Left cardiac atrium (tissue), 4 donors: ENCODE measurements at regions of chr9 and their contacts with region 1.

Region 1: DNA sequence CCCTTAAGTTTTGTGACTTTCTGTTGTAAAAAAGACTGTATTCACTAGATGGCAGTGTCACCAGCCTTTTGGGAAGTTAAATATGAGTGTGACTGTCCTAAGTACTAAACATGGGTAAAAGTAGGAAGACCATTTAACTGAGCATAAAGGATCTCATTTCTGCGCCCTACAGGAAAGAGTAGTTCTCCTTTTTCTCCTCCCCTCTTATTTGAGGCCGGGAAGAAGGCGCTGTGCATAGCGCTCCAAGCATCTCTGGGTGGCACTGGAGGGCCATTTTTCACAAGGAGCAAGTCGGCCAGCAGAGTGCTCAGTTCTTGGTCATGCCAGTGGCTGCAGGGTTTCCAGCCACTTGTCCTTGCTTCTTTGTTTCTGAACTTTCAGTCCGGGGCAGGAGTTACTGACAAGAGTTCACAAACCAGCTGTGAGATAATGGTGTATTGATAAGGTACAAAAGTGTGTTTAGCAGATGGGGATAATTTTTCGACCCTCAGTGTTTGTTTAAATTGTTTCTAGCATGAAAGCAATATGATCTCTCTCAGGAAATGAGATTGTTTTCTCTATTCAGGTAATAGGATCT is 227.6 kb upstream of the DMRT1 start:
- DNase-seq: peak; percentile 80
- ATAC-seq: peak; percentile 93 to 96

Region 2: DNA sequence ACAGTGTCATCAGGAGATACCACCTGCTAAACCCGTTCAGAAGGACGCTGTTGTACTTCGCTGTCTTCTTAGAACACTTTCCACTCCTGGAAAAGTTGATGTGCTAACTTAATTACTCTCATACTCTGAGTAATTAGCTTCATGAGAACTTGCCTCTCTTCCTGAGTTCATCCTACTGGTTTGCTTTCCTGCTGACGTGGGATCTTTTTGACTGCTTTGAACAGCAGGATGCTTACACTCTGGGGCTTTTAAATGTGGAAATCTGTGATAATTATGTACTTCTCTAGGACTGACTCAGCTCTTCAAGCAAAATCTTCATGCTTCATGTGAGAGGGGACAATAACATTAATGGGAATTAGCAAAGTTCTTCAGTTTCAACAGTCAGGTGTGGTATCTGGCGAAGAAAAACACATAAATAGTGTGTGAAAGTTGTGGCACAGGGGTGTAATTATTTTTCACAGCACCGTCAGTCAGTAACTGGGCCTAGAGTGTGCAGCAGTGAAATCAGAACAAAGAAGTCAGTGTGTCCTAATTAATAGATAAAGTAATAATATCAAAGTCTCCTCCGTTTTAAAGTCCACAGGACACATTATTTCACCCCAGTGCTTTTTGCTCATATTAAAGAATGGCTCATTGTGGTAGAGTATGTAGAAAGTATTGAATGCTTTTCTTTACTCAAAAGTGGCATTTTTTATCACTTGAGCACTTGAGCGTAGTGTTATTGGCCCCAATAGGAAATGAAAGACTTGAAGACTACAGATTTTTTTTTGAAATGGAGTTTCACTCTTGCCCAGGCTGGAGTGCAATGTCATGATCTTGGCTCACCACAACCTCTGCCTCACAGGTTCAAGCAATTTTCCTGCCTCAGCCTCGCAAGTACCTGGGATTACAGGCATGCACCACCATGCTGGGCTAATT is 86.8 kb after region 1 on chr9:
- intact Hi-C with region 1: loop called in 1 of 2 experiments (anchors 5 kb)
- DNase-seq: no peak
- ATAC-seq: no peak

Region 3: GRCh38 chr9:757246-757881 is 143.5 kb after region 1 on chr9:
- intact Hi-C with region 1: loop called (anchors 1 to 5 kb)
- DNase-seq: no peak
- ATAC-seq: peak; percentile 71 to 74

Region 4: GRCh38 chr9:763692-764524 is 150.0 kb after region 1 on chr9:
- intact Hi-C with region 1: loop called (anchors 2 to 5 kb)
- DNase-seq: peak; percentile 73
- ATAC-seq: peak; percentile 96 to 98